ENCODE measurements at regions of chr5 and their contacts with region 1.

Region 1: GRCh38 chr5:43484106-43484849 is 613 bp upstream of the TMEM267 start:
- DNase-seq: peak; percentile 90
- H3K4me3 Mint-ChIP-seq: peak overlapping the region; percentile 99
- H3K27ac Mint-ChIP-seq: peak overlapping the region; percentile 100
- H3K4me1 Mint-ChIP-seq: peaks cover 46% of the 10 kb centered on the region
- H3K27me3 Mint-ChIP-seq: no peaks in the 10 kb centered on the region

Region 2: DNA sequence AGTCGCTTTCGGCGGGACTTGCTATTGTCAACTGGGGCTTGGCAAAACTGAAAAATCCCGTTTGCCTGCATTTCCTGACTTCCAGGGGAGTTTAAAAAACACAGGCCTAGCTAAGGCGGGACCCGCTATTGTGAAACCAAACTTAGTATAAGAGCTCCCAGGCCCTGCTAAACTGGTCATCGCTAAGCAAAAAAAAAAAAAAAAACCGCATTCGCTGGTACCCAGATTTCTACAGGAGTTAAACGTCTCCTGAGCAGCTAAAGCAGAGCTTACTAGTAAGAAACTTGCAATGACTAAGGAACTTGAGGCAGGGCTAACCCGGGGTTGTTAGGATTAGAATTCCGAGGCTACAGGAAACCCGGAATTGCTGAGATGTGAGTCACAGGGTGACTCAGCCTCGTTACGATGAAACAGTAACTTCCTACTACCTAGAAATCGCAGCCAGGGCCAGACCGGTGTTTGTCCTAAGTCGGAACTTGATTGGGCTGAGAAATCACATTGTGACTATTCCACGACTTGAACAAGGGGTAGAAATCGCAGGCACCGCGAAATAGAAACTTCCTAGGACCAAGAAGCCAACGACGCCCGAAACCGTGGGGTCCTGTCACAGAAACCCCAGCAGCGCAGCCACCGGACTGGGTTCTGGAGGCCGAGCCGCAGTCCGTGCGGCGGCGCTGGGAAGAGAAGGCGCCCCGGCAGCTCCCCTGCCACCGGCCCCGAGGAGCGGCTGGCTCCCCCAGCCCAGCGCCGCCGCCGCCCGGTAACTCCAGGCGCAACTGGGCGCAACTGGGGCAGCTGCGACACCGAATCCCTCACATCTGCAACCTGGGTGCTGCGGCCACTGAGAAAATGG is 533.6 kb before region 1 on chr5:
- CTCF ChIA-PET with region 1: interaction called, 8 read pairs
- POLR2A ChIA-PET with region 1: interaction called, 26 read pairs
- DNase-seq: peak; percentile 77
- H3K4me3 Mint-ChIP-seq: peak overlapping the region; percentile 85
- H3K27ac Mint-ChIP-seq: peak overlapping the region; percentile 100
- H3K4me1 Mint-ChIP-seq: peaks cover 37% of the 10 kb centered on the region
- H3K27me3 Mint-ChIP-seq: no peaks in the 10 kb centered on the region

Region 3: GRCh38 chr5:43019614-43020293 is 464.5 kb before region 1 on chr5:
- CTCF ChIA-PET with region 1: interaction called, 8 read pairs
- POLR2A ChIA-PET with region 1: interaction called, 28 read pairs
- DNase-seq: peak; percentile 90
- H3K4me3 Mint-ChIP-seq: peak overlapping the region; percentile 93
- H3K27ac Mint-ChIP-seq: peak overlapping the region; percentile 99
- H3K4me1 Mint-ChIP-seq: peaks cover 42% of the 10 kb centered on the region
- H3K27me3 Mint-ChIP-seq: no peaks in the 10 kb centered on the region

Region 4: GRCh38 chr5:43105369-43106289 is 378.6 kb before region 1 on chr5:
- CTCF ChIA-PET with region 1: interaction called, 22 read pairs
- POLR2A ChIA-PET with region 1: interaction called, 5 read pairs
- DNase-seq: peak; percentile 90
- H3K4me3 Mint-ChIP-seq: peak overlapping the region; percentile 78
- H3K27ac Mint-ChIP-seq: peak overlapping the region; percentile 83
- H3K4me1 Mint-ChIP-seq: peaks cover 45% of the 10 kb centered on the region
- H3K27me3 Mint-ChIP-seq: no peaks in the 10 kb centered on the region

Region 5: GRCh38 chr5:43313035-43313853 is 171.0 kb before region 1 on chr5 and contains the start of gene HMGCS1:
- CTCF ChIA-PET with region 1: interaction called, 28 read pairs
- POLR2A ChIA-PET with region 1: interaction called, 80 read pairs
- DNase-seq: peak; percentile 99
- H3K4me3 Mint-ChIP-seq: peak within 1 kb of the TSS; percentile 99
- H3K27ac Mint-ChIP-seq: peak within 1 kb of the TSS; percentile 85
- H3K4me1 Mint-ChIP-seq: peaks cover 73% of the 10 kb centered on the region
- H3K27me3 Mint-ChIP-seq: no peaks in the 10 kb centered on the region
- total RNA-seq, gene HMGCS1: 150 to 155 TPM

Region 6: DNA sequence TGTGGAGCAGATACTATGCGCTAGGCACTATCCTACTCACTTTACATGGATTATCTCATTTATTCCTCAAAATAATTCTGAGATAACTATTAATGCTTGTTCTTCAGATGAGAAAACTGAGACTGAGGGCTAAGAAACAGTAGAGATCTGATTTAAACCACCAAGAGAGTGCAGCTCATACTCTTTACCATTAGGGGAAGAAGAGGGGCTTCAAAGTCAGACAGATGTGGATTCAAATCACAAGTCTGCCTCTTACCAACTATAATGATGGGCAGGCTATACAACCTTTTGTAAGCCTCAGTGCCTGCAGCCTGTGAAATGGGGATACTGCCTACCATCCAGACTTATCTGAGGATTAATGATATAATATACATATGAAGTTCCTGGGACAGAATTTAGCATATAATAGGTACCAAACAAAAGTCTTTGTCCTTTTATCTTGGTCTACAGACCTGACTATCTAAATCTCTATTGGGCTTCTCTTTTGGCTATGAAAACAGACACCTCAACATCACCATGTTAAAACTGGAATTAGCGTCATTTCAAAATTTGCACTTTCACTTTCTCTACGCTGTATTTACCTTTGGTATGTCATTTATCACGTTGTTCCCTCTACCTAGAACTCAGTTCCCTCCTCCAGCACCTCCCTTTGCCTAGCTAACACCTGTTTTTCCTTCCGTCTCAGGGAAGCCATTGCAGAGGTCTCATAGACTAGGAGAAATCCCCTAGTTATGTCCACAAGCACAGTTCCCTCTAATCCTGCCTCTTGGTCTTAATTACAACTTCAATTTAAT is 13.2 kb after region 1 on chr5:
- CTCF ChIA-PET with region 1: interaction called, 7 read pairs
- POLR2A ChIA-PET with region 1: interaction called, 21 read pairs
- DNase-seq: no peak
- H3K4me3 Mint-ChIP-seq: peak overlapping the region; percentile 19
- H3K27ac Mint-ChIP-seq: no peak overlapping the region
- H3K4me1 Mint-ChIP-seq: peaks cover 6% of the 10 kb centered on the region
- H3K27me3 Mint-ChIP-seq: no peaks in the 10 kb centered on the region

Region 7: DNA sequence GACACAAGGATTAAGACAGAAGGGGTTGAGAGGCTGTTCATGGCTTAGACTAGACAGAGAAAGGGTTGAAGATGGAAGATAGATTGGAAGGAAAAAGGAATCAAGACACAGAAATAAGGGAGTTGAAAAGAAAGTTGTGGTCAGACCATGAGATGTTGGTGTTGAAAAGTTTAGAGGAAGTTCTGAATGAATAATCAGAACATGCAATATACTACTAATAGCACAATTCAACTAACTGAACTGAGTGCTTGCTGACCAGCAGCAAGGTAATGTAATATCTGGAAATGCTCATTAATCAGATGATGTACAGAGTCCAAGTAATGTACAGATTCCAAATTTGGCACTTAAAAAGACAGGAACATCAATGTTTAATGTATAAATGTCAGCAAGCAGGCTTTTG is 108.1 kb after region 1 on chr5:
- CTCF ChIA-PET with region 1: no interaction called
- POLR2A ChIA-PET with region 1: no interaction called
- DNase-seq: no peak
- H3K4me3 Mint-ChIP-seq: no peak overlapping the region
- H3K27ac Mint-ChIP-seq: no peak overlapping the region
- H3K4me1 Mint-ChIP-seq: peaks cover 3% of the 10 kb centered on the region
- H3K27me3 Mint-ChIP-seq: no peaks in the 10 kb centered on the region

Region 8: GRCh38 chr5:43602461-43603343 is 118.4 kb after region 1 on chr5 and contains the start of gene NNT:
- CTCF ChIA-PET with region 1: interaction called, 23 read pairs
- POLR2A ChIA-PET with region 1: interaction called, 104 read pairs
- DNase-seq: peak; percentile 84
- H3K4me3 Mint-ChIP-seq: peak within 1 kb of the TSS; percentile 91
- H3K27ac Mint-ChIP-seq: peak within 1 kb of the TSS; percentile 84
- H3K4me1 Mint-ChIP-seq: peaks cover 41% of the 10 kb centered on the region
- H3K27me3 Mint-ChIP-seq: no peaks in the 10 kb centered on the region
- total RNA-seq, gene NNT: 96.4 to 110 TPM

Measured in activated CD4-positive, alpha-beta memory T cell treated with anti-CD3 and anti-CD28 coated beads, Interleukin-2, amount 10 ng/mL, durations not matched to agents 7 days and 5 days (primary cell).